HepG2 (cell line): ENCODE measurements at regions of chr9 and their contacts with region 1.

Region 1: GRCh38 chr9:118038713-118039112 is 334.5 kb downstream of the TLR4 start:
- DNase-seq: no peak
- ATAC-seq: no peak
- H3K4me3 ChIP-seq: no peak overlapping the region
- H3K27ac ChIP-seq: no peak overlapping the region
- H3K4me1 ChIP-seq: no peaks in the 10 kb centered on the region
- H3K27me3 ChIP-seq: no peaks in the 10 kb centered on the region
- CTCF ChIP-seq: no peak
- EP300 ChIP-seq: no peak
- POLR2A ChIP-seq: no peak
- RAD21 ChIP-seq: no peak

Region 2: DNA sequence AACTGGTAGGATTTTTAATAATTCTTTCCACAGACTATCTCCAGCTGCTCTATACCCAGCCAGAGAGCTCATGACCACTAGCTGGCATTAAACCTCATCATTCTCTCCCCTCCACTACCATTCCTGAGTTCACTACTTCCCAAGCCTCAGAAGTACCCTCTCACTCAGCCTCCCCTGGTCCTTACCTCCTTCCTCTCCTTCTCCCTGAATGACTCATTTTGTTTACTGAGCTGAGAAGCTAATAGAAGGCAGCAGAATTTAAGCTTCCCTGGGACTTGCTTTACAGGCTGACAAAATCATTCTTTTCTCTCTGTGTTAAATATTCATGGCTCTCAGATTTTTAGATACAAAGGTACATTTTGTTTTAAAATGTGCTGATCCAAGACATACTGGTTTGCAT is 29.1 kb before region 1 on chr9:
- CTCF ChIA-PET with region 1: no interaction called
- POLR2A ChIA-PET with region 1: no interaction called
- in situ Hi-C with region 1: no loop called
- intact Hi-C with region 1: loop called (anchors 2 kb)
- DNase-seq: no peak
- ATAC-seq: no peak
- H3K4me3 ChIP-seq: no peak overlapping the region
- H3K27ac ChIP-seq: no peak overlapping the region
- H3K4me1 ChIP-seq: no peaks in the 10 kb centered on the region
- H3K27me3 ChIP-seq: no peaks in the 10 kb centered on the region
- CTCF ChIP-seq: no peak
- EP300 ChIP-seq: no peak
- POLR2A ChIP-seq: no peak
- RAD21 ChIP-seq: no peak

Region 3: DNA sequence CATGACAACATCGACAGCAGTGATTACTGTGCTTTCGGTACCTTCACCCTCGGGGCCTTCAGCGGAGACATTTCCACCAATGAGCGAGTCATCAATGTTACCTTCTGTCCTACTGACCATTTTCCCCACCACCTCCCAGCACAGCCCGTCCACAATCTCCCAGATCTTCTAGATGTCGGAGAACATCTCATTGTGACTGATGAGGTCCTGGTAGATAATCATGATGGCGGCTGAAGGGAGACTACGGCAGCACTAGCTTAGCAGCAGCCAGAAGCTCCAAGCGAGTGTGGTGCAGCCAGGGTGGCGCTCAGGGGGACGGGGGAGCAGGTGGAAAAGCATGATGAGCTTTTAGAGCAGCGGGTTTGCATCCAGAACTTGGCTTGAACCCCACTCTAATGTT is 44.4 kb after region 1 on chr9:
- CTCF ChIA-PET with region 1: no interaction called
- POLR2A ChIA-PET with region 1: no interaction called
- in situ Hi-C with region 1: no loop called
- intact Hi-C with region 1: no loop called
- DNase-seq: no peak
- ATAC-seq: no peak
- H3K4me3 ChIP-seq: no peak overlapping the region
- H3K27ac ChIP-seq: no peak overlapping the region
- H3K4me1 ChIP-seq: no peaks in the 10 kb centered on the region
- H3K27me3 ChIP-seq: no peaks in the 10 kb centered on the region
- CTCF ChIP-seq: no peak
- EP300 ChIP-seq: no peak
- POLR2A ChIP-seq: no peak
- RAD21 ChIP-seq: no peak